ENCODE measurements at regions of chr5 and their contacts with region 1.

Region 1: DNA sequence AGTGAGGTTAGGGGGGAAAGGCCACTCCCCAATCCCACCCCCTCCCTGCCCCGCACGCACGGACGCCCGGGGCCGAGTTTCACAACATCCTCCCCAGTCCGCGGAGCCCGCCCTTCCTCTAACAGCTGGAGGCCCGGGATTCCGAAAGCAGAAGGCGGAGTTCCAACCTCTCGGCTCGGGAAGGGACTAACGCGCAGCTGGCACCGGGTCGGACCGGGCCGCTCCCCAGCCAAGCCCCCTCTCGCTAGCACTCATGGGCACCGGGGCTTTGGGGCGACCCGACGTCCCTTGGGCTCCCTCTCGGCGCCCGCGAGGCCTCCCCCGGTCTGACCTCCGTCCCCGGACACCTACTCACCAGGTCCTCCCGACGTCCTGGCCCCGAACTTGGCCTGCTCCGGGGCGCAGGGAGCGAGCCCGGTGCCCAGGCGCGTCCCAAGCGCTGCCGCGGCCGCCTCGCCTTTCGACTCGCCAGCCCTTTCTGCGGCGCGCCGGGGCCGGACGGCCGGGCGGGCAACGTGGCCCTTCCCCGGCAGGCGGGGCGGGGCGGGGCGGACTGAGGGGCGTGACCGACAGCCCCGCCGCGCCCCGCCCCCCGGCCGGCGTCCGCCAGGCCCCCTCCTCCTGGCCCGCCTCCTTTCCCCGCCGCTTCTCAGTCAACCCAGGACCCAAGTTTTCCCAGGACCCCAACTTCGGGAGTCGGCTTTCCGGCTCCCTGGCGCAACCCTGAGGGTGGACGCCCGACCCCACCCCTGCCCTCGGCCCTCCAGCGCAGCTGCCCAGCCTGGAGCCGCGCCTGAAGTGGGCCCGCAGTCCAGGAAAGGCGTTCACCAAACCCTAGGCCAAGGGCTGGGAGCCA is at the start of gene MGAT1:
- DNase-seq: peak; percentile 66
- H3K4me3 ChIP-seq: peak within 1 kb of the TSS; percentile 77 to 96 (median 92)
- H3K27ac ChIP-seq: peak within 1 kb of the TSS; percentile 63
- H3K4me1 ChIP-seq: peaks cover 74% of the 10 kb centered on the region
- H3K27me3 ChIP-seq: no peaks in the 10 kb centered on the region
- CTCF ChIP-seq: no peak
- total RNA-seq, gene MGAT1: 91.4 to 177 TPM

Region 2: DNA sequence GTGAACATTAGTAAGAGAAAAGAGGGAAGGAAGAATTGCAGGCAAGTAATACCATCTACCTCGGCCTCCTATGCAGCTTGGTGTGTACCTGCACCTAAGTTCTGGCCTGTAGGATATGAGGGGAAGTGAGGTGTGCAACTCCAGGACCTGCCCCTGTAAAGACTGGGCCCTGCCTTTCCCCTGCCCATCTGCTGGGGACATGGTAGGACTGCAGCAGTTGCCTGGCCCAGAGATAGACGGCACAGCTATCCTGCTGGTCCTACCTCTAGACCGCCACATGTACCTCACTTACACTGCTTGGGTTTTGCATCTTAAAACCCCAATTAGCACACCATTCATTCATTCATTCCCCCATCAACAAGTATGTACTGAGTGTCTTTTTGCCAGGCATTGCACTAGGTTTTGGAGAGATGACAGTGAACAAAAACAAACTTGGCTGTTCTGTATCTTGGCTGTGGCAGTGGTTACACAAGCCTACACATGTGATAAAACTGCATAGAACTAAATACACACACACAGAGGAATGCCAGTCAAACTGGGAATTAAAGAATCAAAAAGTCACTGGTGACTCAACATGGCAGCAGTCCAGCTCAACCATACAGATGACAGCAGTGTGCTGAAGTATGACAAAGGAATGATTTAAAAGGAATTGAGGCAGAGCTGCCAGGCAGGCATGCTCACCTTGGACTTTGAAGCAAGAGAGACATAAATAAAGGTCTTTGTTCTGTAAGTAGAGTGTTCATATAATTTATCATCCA is 23.4 kb after region 1 on chr5:
- CTCF ChIA-PET with region 1: no interaction called
- dilution Hi-C with region 1: no loop called
- in situ Hi-C with region 1: no loop called
- intact Hi-C with region 1: loop called (anchors 1 kb)
- DNase-seq: peak; percentile 96
- H3K4me3 ChIP-seq: no peak overlapping the region
- H3K27ac ChIP-seq: peak overlapping the region; percentile 4
- H3K4me1 ChIP-seq: peaks cover 28% of the 10 kb centered on the region
- H3K27me3 ChIP-seq: no peaks in the 10 kb centered on the region
- CTCF ChIP-seq: no peak

Region 3: GRCh38 chr5:180860887-180861822 is 58.6 kb after region 1 on chr5 and contains the start of gene ZFP62:
- CTCF ChIA-PET with region 1: interaction called, 14 read pairs
- dilution Hi-C with region 1: loop called (anchors 5 kb)
- in situ Hi-C with region 1: loop called in 1 of 2 experiments (anchors 5 kb)
- intact Hi-C with region 1: loop called (anchors 1 kb)
- DNase-seq: peak; percentile 92
- H3K4me3 ChIP-seq: peak within 1 kb of the TSS; percentile 88 to 97 (median 96)
- H3K27ac ChIP-seq: peak within 1 kb of the TSS; percentile 60
- H3K4me1 ChIP-seq: peaks cover 7% of the 10 kb centered on the region
- H3K27me3 ChIP-seq: no peaks in the 10 kb centered on the region
- CTCF ChIP-seq: no peak
- total RNA-seq, gene ZFP62: 17.2 to 17.5 TPM

Region 4: GRCh38 chr5:181181650-181182565 is 379.4 kb after region 1 on chr5:
- CTCF ChIA-PET with region 1: interaction called, 14 read pairs
- dilution Hi-C with region 1: no loop called
- in situ Hi-C with region 1: no loop called
- intact Hi-C with region 1: no loop called
- DNase-seq: peak; percentile 56
- H3K4me3 ChIP-seq: no peak overlapping the region
- H3K27ac ChIP-seq: no peak overlapping the region
- H3K4me1 ChIP-seq: peaks cover 3% of the 10 kb centered on the region
- H3K27me3 ChIP-seq: no peaks in the 10 kb centered on the region
- CTCF ChIP-seq: peak; percentile 82 to 83

Region 5: DNA sequence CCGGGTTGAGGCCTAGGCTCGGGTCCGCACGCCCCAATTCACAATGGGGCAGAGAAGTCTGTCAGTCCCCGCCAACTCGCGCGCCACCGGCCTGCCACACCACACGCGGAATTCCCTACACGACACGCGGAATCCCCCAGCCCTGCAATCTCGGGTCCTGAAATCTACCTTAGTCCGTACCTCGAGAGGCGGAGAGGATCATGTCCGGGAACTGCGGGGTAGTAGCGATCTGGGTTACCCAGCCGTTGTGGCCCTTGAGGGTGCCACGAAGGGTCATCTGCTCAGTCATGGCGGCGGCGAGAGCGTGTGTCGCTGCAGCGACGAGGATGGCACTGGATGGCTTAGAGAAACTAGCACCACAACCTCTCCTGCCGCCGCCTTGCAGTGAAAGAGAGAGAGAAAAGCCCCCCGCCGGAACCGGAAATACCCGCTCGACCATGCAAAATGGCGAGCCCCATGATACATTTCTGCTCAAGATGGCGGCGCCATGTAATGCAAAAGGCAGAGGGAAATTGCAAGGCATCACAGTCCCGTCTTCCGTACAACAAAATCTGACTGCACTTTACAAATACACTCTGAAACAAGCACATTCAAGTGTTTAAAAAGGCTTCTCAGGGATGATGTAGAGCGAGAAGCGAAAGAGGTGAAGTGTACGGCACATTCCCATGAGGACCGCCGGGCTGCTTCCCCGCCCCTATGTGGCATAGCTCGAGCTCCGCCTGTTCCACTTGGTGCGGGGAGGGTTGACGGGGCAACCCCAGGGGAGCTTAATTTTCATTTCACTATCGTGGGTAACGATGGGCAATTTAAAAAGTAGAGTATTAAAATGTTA is 441.2 kb after region 1 on chr5 and contains the start of gene RACK1:
- CTCF ChIA-PET with region 1: no interaction called
- dilution Hi-C with region 1: no loop called
- in situ Hi-C with region 1: no loop called
- intact Hi-C with region 1: loop called (anchors 10 kb)
- DNase-seq: peak; percentile 86
- H3K4me3 ChIP-seq: peak within 1 kb of the TSS; percentile 96 to 100 (median 98)
- H3K27ac ChIP-seq: peak within 1 kb of the TSS; percentile 84
- H3K4me1 ChIP-seq: peaks cover 35% of the 10 kb centered on the region
- H3K27me3 ChIP-seq: no peaks in the 10 kb centered on the region
- CTCF ChIP-seq: no peak
- total RNA-seq, gene RACK1: 2,031 to 4,986 TPM

Measured in mammary epithelial cell (primary cell).